Activated CD8-positive, alpha-beta memory T cell treated with anti-CD3 and anti-CD28 coated beads, Interleukin-2, amount 10 ng/mL, durations not matched to agents 7 days and 5 days (primary cell): ENCODE measurements at regions of chr9 and their contacts with region 1.

Region 1: DNA sequence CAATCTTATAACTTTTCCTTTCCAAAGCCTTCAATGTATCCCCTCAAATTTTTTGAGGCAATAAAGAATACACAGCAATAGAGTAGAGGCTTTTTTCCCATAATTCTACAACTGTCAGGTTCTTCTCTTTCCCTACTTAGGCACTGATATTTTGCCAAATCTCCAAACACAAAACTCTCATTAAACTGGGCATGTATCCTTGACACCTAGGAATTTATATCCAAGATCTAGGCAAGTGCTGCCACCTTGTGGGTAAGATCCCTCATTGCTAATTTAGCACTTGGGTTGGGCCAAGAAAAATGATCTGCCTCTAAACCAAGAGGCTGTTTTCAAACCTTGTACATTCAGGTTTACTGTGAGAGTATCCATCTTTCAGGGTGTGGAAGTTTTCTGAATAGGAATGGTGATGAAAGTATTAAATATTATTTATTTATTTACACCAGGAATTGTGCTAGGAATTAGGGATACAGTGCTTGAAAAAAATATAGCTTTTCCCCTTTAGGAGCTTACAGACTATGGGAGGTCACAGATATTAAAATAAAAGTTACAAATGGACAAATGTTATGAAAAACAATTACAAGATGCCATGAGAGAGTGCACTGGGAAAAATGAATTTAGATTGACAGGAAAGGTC is 17.6 kb downstream of the TSTD2 start:
- DNase-seq: peak; percentile 75
- ATAC-seq: peak; percentile 53
- H3K4me3 Mint-ChIP-seq: no peak overlapping the region
- H3K27ac Mint-ChIP-seq: no peak overlapping the region
- H3K4me1 Mint-ChIP-seq: peaks cover 16% of the 10 kb centered on the region
- H3K27me3 Mint-ChIP-seq: no peaks in the 10 kb centered on the region

Region 2: DNA sequence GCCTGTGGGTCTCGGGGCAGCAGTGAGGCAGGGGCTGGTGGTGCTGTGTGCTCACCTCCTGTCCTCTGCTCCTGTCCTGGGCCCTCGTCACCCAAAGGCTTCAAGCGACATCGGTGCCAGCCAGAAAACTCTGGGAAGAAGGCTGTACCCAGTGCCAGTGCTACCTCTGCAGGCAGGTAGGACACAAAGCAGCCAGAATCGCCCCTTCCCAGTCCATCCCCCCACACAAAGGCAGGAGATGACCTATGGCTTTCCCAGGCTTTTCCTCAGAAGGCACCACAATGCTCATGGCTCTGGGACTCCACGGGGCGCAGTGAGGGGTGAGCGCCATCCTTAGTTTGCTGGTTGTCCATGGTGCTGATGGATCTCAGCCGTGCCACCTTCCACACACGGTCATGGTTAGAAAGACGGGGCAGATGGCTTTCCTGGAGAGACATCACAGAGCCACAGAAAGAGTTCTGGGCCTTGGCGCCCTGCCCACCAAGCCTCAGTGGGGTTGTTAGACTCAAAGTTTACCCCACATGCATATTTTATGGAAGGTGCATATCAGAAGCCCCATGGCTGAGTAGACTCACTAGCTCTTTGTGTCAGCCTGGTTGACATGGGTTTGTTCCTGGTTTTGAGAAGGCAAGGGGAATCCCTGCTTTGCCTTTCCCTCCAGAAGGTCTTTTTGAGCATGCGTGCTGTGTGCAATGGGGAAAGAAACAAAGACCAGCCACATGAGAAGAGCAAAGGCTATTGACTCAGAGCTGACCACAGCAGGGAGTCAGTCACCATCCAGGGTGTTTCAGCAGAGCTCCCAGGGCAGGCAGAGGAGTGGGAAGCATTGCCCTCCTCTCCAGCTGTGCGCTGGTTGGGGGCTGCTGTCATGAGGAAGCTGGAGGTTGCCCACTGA is 253.0 kb before region 1 on chr9:
- CTCF ChIA-PET with region 1: no interaction called
- DNase-seq: no peak
- ATAC-seq: no peak
- H3K4me3 Mint-ChIP-seq: no peak overlapping the region
- H3K27ac Mint-ChIP-seq: no peak overlapping the region
- H3K4me1 Mint-ChIP-seq: peaks cover 12% of the 10 kb centered on the region
- H3K27me3 Mint-ChIP-seq: no peaks in the 10 kb centered on the region

Region 3: DNA sequence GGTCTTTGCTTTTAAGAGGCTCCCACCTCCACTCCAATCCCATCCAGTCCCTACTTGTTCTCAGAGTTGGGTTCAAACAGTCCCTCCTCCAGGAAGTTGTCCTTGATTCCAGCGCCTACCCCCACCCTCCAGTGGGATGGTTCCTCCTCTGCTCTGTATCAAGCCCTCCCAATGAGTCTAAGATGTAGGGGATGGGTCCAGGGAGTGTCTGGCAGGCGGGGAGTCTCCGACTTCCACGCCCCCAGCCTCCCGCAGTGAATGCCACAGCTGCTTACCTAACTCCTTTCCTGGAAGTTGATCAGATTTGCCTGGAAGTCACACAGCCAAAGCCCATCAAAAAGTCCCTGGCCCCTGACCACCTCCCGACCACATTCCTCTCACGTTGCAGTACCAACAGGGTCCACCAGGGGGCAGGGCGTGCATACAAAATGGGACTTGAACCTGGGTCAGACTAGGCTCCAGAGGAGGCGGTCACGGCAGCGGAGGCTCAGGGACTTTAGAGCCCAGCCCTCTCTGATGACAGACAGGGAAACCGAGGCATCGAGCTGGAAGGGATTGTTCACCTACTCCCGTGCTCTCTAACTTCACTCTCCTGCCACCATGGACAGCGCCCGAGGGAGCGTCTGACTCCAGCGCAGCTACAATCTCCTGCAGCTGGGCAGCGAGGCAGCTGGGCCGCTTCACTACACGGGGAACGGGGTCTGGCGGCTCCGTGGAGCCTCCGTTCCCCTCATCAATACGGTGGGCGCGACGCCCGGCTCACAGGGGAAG is 228.6 kb before region 1 on chr9:
- CTCF ChIA-PET with region 1: interaction called, 37 read pairs
- DNase-seq: peak; percentile 83
- ATAC-seq: peak; percentile 74
- H3K4me3 Mint-ChIP-seq: no peak overlapping the region
- H3K27ac Mint-ChIP-seq: no peak overlapping the region
- H3K4me1 Mint-ChIP-seq: peaks cover 34% of the 10 kb centered on the region
- H3K27me3 Mint-ChIP-seq: peaks cover 66% of the 10 kb centered on the region

Region 4: GRCh38 chr9:97411789-97412625 is 203.5 kb before region 1 on chr9 and contains the start of gene TDRD7:
- CTCF ChIA-PET with region 1: interaction called, 36 read pairs
- DNase-seq: peak; percentile 87
- ATAC-seq: peak; percentile 87
- H3K4me3 Mint-ChIP-seq: peak within 1 kb of the TSS; percentile 76
- H3K27ac Mint-ChIP-seq: peak within 1 kb of the TSS; percentile 64
- H3K4me1 Mint-ChIP-seq: peaks cover 22% of the 10 kb centered on the region
- H3K27me3 Mint-ChIP-seq: peaks cover 41% of the 10 kb centered on the region
- total RNA-seq, gene TDRD7: 10.3 to 15.3 TPM

Region 5: GRCh38 chr9:97468658-97469448 is 146.7 kb before region 1 on chr9:
- CTCF ChIA-PET with region 1: interaction called, 54 read pairs
- DNase-seq: peak; percentile 60
- ATAC-seq: peak; percentile 65
- H3K4me3 Mint-ChIP-seq: no peak overlapping the region
- H3K27ac Mint-ChIP-seq: no peak overlapping the region
- H3K4me1 Mint-ChIP-seq: no peaks in the 10 kb centered on the region
- H3K27me3 Mint-ChIP-seq: no peaks in the 10 kb centered on the region

Region 6: GRCh38 chr9:97501177-97501971 is 114.2 kb before region 1 on chr9 and contains the start of gene TMOD1:
- CTCF ChIA-PET with region 1: interaction called, 10 read pairs
- DNase-seq: peak; percentile 52
- ATAC-seq: peak; percentile 86
- H3K4me3 Mint-ChIP-seq: peak within 1 kb of the TSS; percentile 63
- H3K27ac Mint-ChIP-seq: no peak within 1 kb of the TSS
- H3K4me1 Mint-ChIP-seq: peaks cover 18% of the 10 kb centered on the region
- H3K27me3 Mint-ChIP-seq: peaks cover 50% of the 10 kb centered on the region
- total RNA-seq, gene TMOD1: 0.88 to 1.0 TPM

Region 7: GRCh38 chr9:97632985-97633858 is 17.7 kb after region 1 on chr9 and contains the starts of genes NCBP1 and TSTD2:
- CTCF ChIA-PET with region 1: interaction called, 66 read pairs
- DNase-seq: peak; percentile 98
- ATAC-seq: peak; percentile 93
- H3K4me3 Mint-ChIP-seq: peak within 1 kb of the TSS; percentile 97
- H3K27ac Mint-ChIP-seq: peak within 1 kb of the TSS; percentile 99
- H3K4me1 Mint-ChIP-seq: peaks cover 46% of the 10 kb centered on the region
- H3K27me3 Mint-ChIP-seq: no peaks in the 10 kb centered on the region
- total RNA-seq, gene NCBP1: 41.8 to 42.8 TPM
- total RNA-seq, gene TSTD2: 12.6 to 15.0 TPM

Region 8: GRCh38 chr9:97666907-97667686 is 51.5 kb after region 1 on chr9:
- CTCF ChIA-PET with region 1: no interaction called
- DNase-seq: no peak
- ATAC-seq: no peak
- H3K4me3 Mint-ChIP-seq: no peak overlapping the region
- H3K27ac Mint-ChIP-seq: peak overlapping the region; percentile 67
- H3K4me1 Mint-ChIP-seq: peaks cover 22% of the 10 kb centered on the region
- H3K27me3 Mint-ChIP-seq: no peaks in the 10 kb centered on the region